B cell (primary cell): ENCODE measurements at regions of chr3 and their contacts with region 1.

Region 1: GRCh38 chr3:101803173-101803782 is 24.3 kb downstream of the NXPE3 start:
- DNase-seq: peak; percentile 75
- ATAC-seq: peak; percentile 99
- H3K4me3 ChIP-seq: no peak overlapping the region
- H3K4me3 Mint-ChIP-seq: no peak overlapping the region
- H3K27ac ChIP-seq: no peak overlapping the region
- H3K27ac Mint-ChIP-seq: no peak overlapping the region
- H3K4me1 ChIP-seq: no peaks in the 10 kb centered on the region
- H3K4me1 Mint-ChIP-seq: peaks cover 4% of the 10 kb centered on the region
- H3K27me3 ChIP-seq: no peaks in the 10 kb centered on the region
- H3K27me3 Mint-ChIP-seq: no peaks in the 10 kb centered on the region
- CTCF ChIP-seq: peak; percentile 90

Region 2: GRCh38 chr3:101695779-101696372 is 107.4 kb before region 1 on chr3:
- CTCF ChIA-PET with region 1: interaction called, 12 read pairs
- POLR2A ChIA-PET with region 1: no interaction called
- intact Hi-C with region 1: loop called (anchors 1 kb)
- DNase-seq: peak; percentile 76
- ATAC-seq: no peak
- H3K4me3 ChIP-seq: no peak overlapping the region
- H3K4me3 Mint-ChIP-seq: no peak overlapping the region
- H3K27ac ChIP-seq: no peak overlapping the region
- H3K27ac Mint-ChIP-seq: no peak overlapping the region
- H3K4me1 ChIP-seq: no peaks in the 10 kb centered on the region
- H3K4me1 Mint-ChIP-seq: peaks cover 4% of the 10 kb centered on the region
- H3K27me3 ChIP-seq: no peaks in the 10 kb centered on the region
- H3K27me3 Mint-ChIP-seq: no peaks in the 10 kb centered on the region
- CTCF ChIP-seq: peak; percentile 86

Region 3: DNA sequence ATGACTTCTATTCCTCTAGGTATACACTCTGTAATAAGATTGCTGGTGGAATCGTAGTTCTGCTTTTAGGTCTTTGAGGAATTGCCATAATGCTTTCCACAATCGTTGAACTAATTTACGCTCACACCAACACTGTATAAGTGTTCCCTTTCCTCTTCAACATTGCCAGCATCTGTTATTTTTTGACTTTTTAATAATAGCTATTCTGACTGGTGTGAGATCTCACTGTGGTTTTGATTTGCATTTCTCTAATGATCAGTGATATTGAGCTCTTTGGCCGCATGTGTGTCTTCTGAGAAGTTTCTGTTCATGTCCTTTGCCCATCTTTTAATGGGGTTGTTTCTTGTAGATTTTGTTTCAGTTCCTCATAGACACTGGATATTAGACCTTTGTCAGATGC is 11.5 kb before region 1 on chr3:
- CTCF ChIA-PET with region 1: interaction called, 36 read pairs
- POLR2A ChIA-PET with region 1: no interaction called
- intact Hi-C with region 1: no loop called
- DNase-seq: peak; percentile 66
- ATAC-seq: peak; percentile 87
- H3K4me3 ChIP-seq: peak overlapping the region in 1 of 5 experiments; percentile 9
- H3K4me3 Mint-ChIP-seq: peak overlapping the region; percentile 12
- H3K27ac ChIP-seq: peak overlapping the region in 1 of 2 donors; percentile 11
- H3K27ac Mint-ChIP-seq: peak overlapping the region; percentile 2
- H3K4me1 ChIP-seq: peaks cover 18 to 25% of the 10 kb centered on the region in 2 donors
- H3K4me1 Mint-ChIP-seq: peaks cover 35% of the 10 kb centered on the region
- H3K27me3 ChIP-seq: no peaks in the 10 kb centered on the region
- H3K27me3 Mint-ChIP-seq: no peaks in the 10 kb centered on the region
- CTCF ChIP-seq: no peak

Region 4: GRCh38 chr3:101819758-101820157 is 16.5 kb after region 1 on chr3:
- CTCF ChIA-PET with region 1: interaction called, 87 read pairs
- POLR2A ChIA-PET with region 1: no interaction called
- intact Hi-C with region 1: no loop called
- DNase-seq: peak; percentile 43
- ATAC-seq: no peak
- H3K4me3 ChIP-seq: no peak overlapping the region
- H3K4me3 Mint-ChIP-seq: no peak overlapping the region
- H3K27ac ChIP-seq: no peak overlapping the region
- H3K27ac Mint-ChIP-seq: peak overlapping the region; percentile 20
- H3K4me1 ChIP-seq: peaks cover 33 to 37% of the 10 kb centered on the region in 2 donors
- H3K4me1 Mint-ChIP-seq: peaks cover 42% of the 10 kb centered on the region
- H3K27me3 ChIP-seq: no peaks in the 10 kb centered on the region
- H3K27me3 Mint-ChIP-seq: no peaks in the 10 kb centered on the region
- CTCF ChIP-seq: no peak